ENCODE measurements at regions of chr5 and their contacts with region 1.

Region 1: GRCh38 chr5:80960531-80961375 is 590 bp downstream of the RASGRF2 start:
- DNase-seq: peak; percentile 69
- ATAC-seq: peak; percentile 42
- H3K4me3 Mint-ChIP-seq: peak overlapping the region; percentile 83
- H3K27ac Mint-ChIP-seq: peak overlapping the region; percentile 86
- H3K4me1 Mint-ChIP-seq: peaks cover 74% of the 10 kb centered on the region
- H3K27me3 Mint-ChIP-seq: peaks cover 5% of the 10 kb centered on the region

Region 2: DNA sequence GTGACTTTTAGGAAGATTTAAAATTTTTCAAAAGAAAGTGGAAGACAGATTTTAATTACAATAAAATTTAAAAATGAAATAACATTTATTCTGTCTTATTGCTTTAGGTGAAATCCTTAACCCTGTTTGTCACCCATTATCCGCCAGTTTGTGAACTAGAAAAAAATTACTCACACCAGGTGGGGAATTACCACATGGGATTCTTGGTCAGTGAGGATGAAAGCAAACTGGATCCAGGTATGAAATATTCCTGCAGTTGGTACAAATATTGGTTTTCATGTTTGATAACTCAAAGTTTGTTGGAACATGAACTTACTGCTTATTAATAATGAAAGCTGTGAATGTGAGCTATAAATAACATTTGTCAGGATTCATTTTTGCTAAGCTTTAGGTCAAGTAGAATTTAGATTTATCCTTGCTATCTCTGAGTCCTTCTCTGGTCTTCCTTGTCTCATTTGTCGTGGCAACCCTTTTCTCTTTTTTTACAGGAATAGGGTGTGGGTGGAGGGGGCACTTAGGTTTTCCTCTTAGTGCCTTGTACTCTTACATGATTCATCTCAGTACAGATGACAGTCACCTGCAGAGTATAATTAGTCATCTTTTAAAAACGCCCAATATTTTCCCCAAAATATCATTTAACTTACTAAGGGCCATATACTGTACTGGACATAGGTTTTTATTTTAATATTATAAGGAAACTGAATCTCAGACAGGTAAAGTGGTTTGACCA is 95.9 kb before region 1 on chr5:
- CTCF ChIA-PET with region 1: no interaction called
- POLR2A ChIA-PET with region 1: no interaction called
- intact Hi-C with region 1: loop called in 1 of 2 experiments (anchors 5 kb)
- DNase-seq: peak; percentile 39
- ATAC-seq: peak; percentile 78
- H3K4me3 Mint-ChIP-seq: no peak overlapping the region
- H3K27ac Mint-ChIP-seq: peak overlapping the region; percentile 21
- H3K4me1 Mint-ChIP-seq: peaks cover 53% of the 10 kb centered on the region
- H3K27me3 Mint-ChIP-seq: no peaks in the 10 kb centered on the region

Region 3: GRCh38 chr5:81014348-81014747 is 53.6 kb after region 1 on chr5:
- CTCF ChIA-PET with region 1: interaction called, 3 read pairs
- POLR2A ChIA-PET with region 1: interaction called, 3 read pairs
- intact Hi-C with region 1: loop called (anchors 2 kb)
- DNase-seq: peak; percentile 35
- ATAC-seq: no peak
- H3K4me3 Mint-ChIP-seq: no peak overlapping the region
- H3K27ac Mint-ChIP-seq: no peak overlapping the region
- H3K4me1 Mint-ChIP-seq: peaks cover 76% of the 10 kb centered on the region
- H3K27me3 Mint-ChIP-seq: no peaks in the 10 kb centered on the region

Region 4: DNA sequence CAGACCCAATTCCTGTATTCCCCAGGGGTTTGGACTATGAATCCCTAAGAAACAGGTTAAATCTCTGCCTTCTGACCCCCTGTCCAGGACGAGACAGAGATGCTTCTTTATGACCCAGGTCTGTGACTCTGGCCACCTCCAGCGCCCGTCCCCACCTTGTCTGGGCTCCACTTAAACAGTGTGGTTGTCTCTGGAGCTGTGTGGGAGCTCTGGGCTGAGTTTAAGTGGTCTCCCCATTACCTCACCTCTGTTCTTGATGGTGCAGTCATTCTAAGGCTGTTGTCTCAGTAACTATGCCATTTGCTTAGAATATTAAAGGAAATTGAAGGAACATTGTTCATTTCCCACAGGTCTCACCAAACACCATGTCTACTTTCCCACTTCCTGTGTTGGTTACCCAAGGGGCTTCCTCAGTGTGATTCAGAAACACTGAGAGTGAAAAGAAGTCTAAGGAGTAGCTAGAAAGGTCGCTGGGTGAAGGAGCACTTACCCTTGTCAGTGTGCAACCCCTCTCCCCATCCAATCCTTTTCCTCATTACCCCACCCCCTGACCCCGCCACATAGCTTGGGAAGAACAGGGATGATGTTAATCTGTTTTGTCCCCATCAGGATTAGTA is 144.6 kb after region 1 on chr5:
- CTCF ChIA-PET with region 1: interaction called, 16 read pairs
- POLR2A ChIA-PET with region 1: no interaction called
- intact Hi-C with region 1: loop called (anchors 1 to 5 kb)
- DNase-seq: no peak
- ATAC-seq: peak; percentile 47
- H3K4me3 Mint-ChIP-seq: no peak overlapping the region
- H3K27ac Mint-ChIP-seq: peak overlapping the region; percentile 42
- H3K4me1 Mint-ChIP-seq: peaks cover 23% of the 10 kb centered on the region
- H3K27me3 Mint-ChIP-seq: no peaks in the 10 kb centered on the region

Region 5: GRCh38 chr5:81288021-81288433 is 327.3 kb after region 1 on chr5:
- CTCF ChIA-PET with region 1: no interaction called
- POLR2A ChIA-PET with region 1: interaction called, 3 read pairs
- intact Hi-C with region 1: loop called in 1 of 2 experiments (anchors 5 kb)
- DNase-seq: no peak
- ATAC-seq: peak; percentile 14
- H3K4me3 Mint-ChIP-seq: no peak overlapping the region
- H3K27ac Mint-ChIP-seq: no peak overlapping the region
- H3K4me1 Mint-ChIP-seq: peaks cover 57% of the 10 kb centered on the region
- H3K27me3 Mint-ChIP-seq: no peaks in the 10 kb centered on the region